ENCODE measurements at regions of chr19 and their contacts with region 1.

Region 1: GRCh38 chr19:36915992-36916830 is at the starts of genes ZNF568 and ZNF829:
- DNase-seq: peak; percentile 96
- H3K4me3 Mint-ChIP-seq: peak within 1 kb of the TSS; percentile 92
- H3K27ac Mint-ChIP-seq: peak within 1 kb of the TSS; percentile 94
- H3K4me1 Mint-ChIP-seq: peaks cover 29% of the 10 kb centered on the region
- H3K27me3 Mint-ChIP-seq: no peaks in the 10 kb centered on the region
- total RNA-seq, gene ZNF568: 4.8 to 6.3 TPM
- total RNA-seq, gene ZNF829: 3.8 to 4.3 TPM

Region 2: GRCh38 chr19:36605101-36605876 is 310.9 kb before region 1 on chr19 and contains the start of gene ZNF382:
- CTCF ChIA-PET with region 1: no interaction called
- POLR2A ChIA-PET with region 1: no interaction called
- intact Hi-C with region 1: loop called (anchors 1 kb)
- DNase-seq: peak; percentile 90
- H3K4me3 Mint-ChIP-seq: peak within 1 kb of the TSS; percentile 92
- H3K27ac Mint-ChIP-seq: peak within 1 kb of the TSS; percentile 95
- H3K4me1 Mint-ChIP-seq: peaks cover 24% of the 10 kb centered on the region
- H3K27me3 Mint-ChIP-seq: no peaks in the 10 kb centered on the region
- total RNA-seq, gene ZNF382: 10.9 to 14.8 TPM

Region 3: DNA sequence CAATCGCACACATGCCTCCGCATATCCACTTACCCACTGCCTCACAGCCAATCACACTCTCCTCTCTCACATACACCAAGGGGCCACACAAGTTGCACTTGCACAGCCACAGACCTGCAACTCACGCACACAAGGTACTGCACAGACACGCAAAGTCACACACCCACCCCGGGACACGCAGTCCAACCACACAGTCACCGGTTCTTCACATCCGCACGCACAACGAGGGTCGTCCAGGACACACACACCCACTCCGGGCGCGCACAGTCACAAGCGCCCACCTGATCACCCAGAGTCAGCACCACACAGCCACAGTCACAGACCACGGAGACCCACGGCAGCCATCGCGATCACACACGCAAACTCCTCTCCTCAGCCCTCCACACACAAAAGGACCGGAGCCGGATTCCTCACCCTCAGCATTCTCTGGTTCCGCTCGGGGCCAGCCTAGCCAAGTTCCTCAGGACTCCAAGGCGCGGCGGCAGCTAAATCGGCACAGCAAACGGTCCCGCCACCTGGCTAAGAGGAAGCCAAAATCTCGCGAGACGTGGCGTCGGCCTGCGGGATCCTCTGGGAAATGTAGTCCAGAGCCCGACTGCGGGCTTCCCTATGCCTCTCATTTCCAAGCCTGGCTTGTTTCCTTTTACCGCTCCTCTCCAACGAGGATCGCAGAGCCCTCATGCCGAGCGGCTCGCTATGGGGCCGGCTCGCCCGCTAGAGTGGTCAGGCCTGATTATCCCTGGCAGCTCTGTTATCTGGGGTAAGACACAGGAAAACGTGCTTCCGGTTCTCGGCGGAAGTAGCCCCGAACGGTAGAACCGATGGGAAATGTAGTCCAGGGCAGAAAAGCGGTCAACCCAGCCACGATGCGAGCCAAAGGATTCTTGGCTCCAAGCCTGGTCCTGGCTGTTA is 143.6 kb before region 1 on chr19 and contains the start of gene ZNF850:
- CTCF ChIA-PET with region 1: no interaction called
- POLR2A ChIA-PET with region 1: no interaction called
- intact Hi-C with region 1: loop called (anchors 2 kb)
- DNase-seq: peak; percentile 95
- H3K4me3 Mint-ChIP-seq: peak within 1 kb of the TSS; percentile 91
- H3K27ac Mint-ChIP-seq: peak within 1 kb of the TSS; percentile 83
- H3K4me1 Mint-ChIP-seq: peaks cover 21% of the 10 kb centered on the region
- H3K27me3 Mint-ChIP-seq: no peaks in the 10 kb centered on the region
- total RNA-seq, gene ZNF850: 6.7 TPM

Region 4: GRCh38 chr19:36837906-36838783 is 78.1 kb before region 1 on chr19 and contains the start of gene ZNF790:
- CTCF ChIA-PET with region 1: no interaction called
- POLR2A ChIA-PET with region 1: no interaction called
- intact Hi-C with region 1: loop called (anchors 5 kb)
- DNase-seq: peak; percentile 93
- H3K4me3 Mint-ChIP-seq: no peak within 1 kb of the TSS
- H3K27ac Mint-ChIP-seq: no peak within 1 kb of the TSS
- H3K4me1 Mint-ChIP-seq: peaks cover 6% of the 10 kb centered on the region
- H3K27me3 Mint-ChIP-seq: no peaks in the 10 kb centered on the region
- total RNA-seq, gene ZNF790: 6.1 to 6.9 TPM

Region 5: DNA sequence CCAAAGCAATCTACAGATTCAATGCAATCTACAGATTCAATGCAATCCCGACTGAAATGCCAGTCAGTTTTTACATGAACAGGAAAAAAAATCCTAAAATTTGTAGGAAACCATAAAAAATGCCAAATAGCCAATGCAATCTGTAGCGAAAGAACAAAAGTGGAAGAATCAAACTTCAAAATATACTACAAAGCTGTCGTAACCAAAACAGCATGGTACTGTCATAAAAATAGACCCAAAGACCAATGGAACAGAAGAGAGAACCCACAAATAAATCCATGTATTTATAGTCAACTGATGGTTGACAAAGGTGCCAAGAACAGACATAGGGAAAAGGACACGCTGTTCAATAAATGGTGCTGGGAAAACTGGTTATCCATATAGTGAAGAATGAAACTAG is 17.8 kb before region 1 on chr19:
- CTCF ChIA-PET with region 1: no interaction called
- POLR2A ChIA-PET with region 1: no interaction called
- intact Hi-C with region 1: no loop called
- DNase-seq: no peak
- H3K4me3 Mint-ChIP-seq: no peak overlapping the region
- H3K27ac Mint-ChIP-seq: no peak overlapping the region
- H3K4me1 Mint-ChIP-seq: no peaks in the 10 kb centered on the region
- H3K27me3 Mint-ChIP-seq: no peaks in the 10 kb centered on the region

Region 6: GRCh38 chr19:36939153-36939552 is 22.9 kb after region 1 on chr19:
- CTCF ChIA-PET with region 1: no interaction called
- POLR2A ChIA-PET with region 1: no interaction called
- intact Hi-C with region 1: no loop called
- DNase-seq: no peak
- H3K4me3 Mint-ChIP-seq: no peak overlapping the region
- H3K27ac Mint-ChIP-seq: no peak overlapping the region
- H3K4me1 Mint-ChIP-seq: no peaks in the 10 kb centered on the region
- H3K27me3 Mint-ChIP-seq: no peaks in the 10 kb centered on the region

Region 7: DNA sequence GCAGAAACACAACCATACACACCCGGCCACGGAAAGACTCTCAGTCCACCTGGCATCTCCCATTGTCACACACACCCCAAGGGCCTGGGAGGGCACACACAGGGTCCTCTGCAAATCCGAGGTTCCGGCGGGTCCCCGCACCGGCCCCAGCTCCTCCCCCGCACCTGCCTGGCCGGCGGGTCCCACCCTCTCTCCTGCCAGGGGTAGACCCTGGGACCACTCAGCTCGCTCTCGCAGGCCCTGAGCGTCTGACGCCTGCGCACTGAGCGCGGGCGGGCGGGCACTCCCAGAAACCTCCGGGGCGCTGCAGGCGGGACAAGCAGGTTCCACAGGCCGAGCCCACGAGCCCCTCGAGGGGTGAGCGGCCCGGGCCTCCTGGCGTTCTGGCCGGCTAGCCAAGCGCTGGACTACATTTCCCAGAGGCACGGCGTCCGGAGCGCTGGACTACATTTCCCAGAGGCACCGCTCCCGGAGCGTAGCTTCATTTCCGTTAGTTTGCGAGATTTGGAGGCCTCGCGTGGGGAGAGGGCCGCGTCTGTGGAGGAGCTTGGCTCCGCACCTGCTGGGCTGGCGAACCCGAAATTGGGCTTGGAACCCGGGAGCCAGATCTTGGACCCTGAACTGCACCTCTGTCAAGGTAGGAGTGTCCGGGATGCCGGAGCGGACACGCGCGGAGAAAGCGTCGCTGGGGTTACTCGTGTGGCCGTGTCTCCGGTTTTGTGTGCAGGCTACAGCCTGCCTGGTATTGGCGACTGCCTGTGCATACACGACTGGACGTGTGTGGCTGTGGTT is 161.9 kb after region 1 on chr19 and contains the start of gene ZNF420:
- CTCF ChIA-PET with region 1: no interaction called
- POLR2A ChIA-PET with region 1: no interaction called
- intact Hi-C with region 1: loop called (anchors 2 kb)
- DNase-seq: peak; percentile 93
- H3K4me3 Mint-ChIP-seq: peak within 1 kb of the TSS; percentile 94
- H3K27ac Mint-ChIP-seq: peak within 1 kb of the TSS; percentile 79
- H3K4me1 Mint-ChIP-seq: peaks cover 31% of the 10 kb centered on the region
- H3K27me3 Mint-ChIP-seq: no peaks in the 10 kb centered on the region
- total RNA-seq, gene ZNF420: 6.5 to 8.7 TPM

Region 8: GRCh38 chr19:37217855-37218591 is 301.8 kb after region 1 on chr19 and contains the start of gene ZNF383:
- CTCF ChIA-PET with region 1: interaction called, 3 read pairs
- POLR2A ChIA-PET with region 1: no interaction called
- intact Hi-C with region 1: loop called (anchors 1 kb)
- DNase-seq: peak; percentile 90
- H3K4me3 Mint-ChIP-seq: peak within 1 kb of the TSS; percentile 99
- H3K27ac Mint-ChIP-seq: peak within 1 kb of the TSS; percentile 99
- H3K4me1 Mint-ChIP-seq: peaks cover 19% of the 10 kb centered on the region
- H3K27me3 Mint-ChIP-seq: no peaks in the 10 kb centered on the region
- total RNA-seq, gene ZNF383: 7.7 TPM

Measured in activated CD4-positive, alpha-beta memory T cell treated with anti-CD3 and anti-CD28 coated beads for 36 hours (primary cell).